ENCODE measurements at regions of chr2 and their contacts with region 1.

Region 1: GRCh38 chr2:203928849-203929248 is 7.7 kb upstream of the ICOS start:
- DNase-seq: peak in 3 of 14 experiments; percentile 52 to 62 (median 59)
- ATAC-seq: peak; percentile 41
- H3K4me3 ChIP-seq: no peak overlapping the region
- H3K4me3 Mint-ChIP-seq: no peak overlapping the region
- H3K27ac ChIP-seq: no peak overlapping the region
- H3K27ac Mint-ChIP-seq: no peak overlapping the region
- H3K4me1 ChIP-seq: peaks cover 19% of the 10 kb centered on the region
- H3K4me1 Mint-ChIP-seq: peaks cover 39% of the 10 kb centered on the region
- H3K27me3 ChIP-seq: no peaks in the 10 kb centered on the region
- H3K27me3 Mint-ChIP-seq: no peaks in the 10 kb centered on the region
- CTCF ChIP-seq: peak; percentile 80

Region 2: DNA sequence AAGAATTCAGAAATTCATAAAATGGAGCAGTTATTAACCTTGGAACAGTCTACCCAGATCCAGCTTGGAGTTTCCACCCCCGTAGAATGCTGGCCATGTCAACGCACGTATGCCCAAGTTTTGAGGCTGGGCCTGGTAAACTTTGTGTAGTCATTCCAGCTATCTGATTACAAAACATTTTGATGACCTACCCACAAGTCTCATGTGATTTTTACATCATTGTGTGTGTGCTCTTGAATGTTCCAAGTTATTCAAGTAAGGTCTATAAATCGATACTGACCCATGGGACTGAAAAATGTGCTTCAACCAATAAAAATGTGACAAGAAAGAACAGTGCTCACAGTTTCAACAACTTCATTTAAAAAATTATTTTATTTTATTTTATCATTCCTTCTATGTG is 24.8 kb before region 1 on chr2:
- CTCF ChIA-PET with region 1: no interaction called
- POLR2A ChIA-PET with region 1: no interaction called
- intact Hi-C with region 1: no loop called
- DNase-seq: no peak
- ATAC-seq: no peak
- H3K4me3 ChIP-seq: no peak overlapping the region
- H3K4me3 Mint-ChIP-seq: no peak overlapping the region
- H3K27ac ChIP-seq: no peak overlapping the region
- H3K27ac Mint-ChIP-seq: no peak overlapping the region
- H3K4me1 ChIP-seq: peaks cover 7% of the 10 kb centered on the region
- H3K4me1 Mint-ChIP-seq: peaks cover 2% of the 10 kb centered on the region
- H3K27me3 ChIP-seq: no peaks in the 10 kb centered on the region
- H3K27me3 Mint-ChIP-seq: no peaks in the 10 kb centered on the region
- CTCF ChIP-seq: no peak

Region 3: DNA sequence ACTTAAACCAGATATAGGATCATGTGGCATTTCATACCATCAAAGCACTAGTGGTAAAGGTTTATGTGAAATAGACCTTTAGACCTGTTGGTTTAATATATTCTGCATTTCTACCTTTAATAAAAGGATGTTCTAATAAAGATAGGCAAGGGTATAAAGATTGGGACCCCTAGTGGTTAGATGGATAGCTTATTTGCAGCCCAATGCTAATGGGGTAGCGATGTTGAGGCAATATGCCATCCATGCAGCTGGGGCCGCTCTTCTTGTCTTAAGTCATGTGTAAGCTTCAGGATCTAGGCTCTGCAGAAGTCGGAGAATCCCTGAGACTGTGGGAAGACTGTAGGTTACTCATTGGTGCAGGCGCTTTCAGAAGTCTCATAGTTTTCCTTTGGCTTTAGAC is 122.6 kb after region 1 on chr2:
- CTCF ChIA-PET with region 1: interaction called, 9 read pairs
- POLR2A ChIA-PET with region 1: interaction called, 7 read pairs
- intact Hi-C with region 1: loop called (anchors 1 to 2 kb)
- DNase-seq: peak in 4 of 14 experiments; percentile 5 to 55 (median 47)
- ATAC-seq: peak; percentile 52
- H3K4me3 ChIP-seq: no peak overlapping the region
- H3K4me3 Mint-ChIP-seq: no peak overlapping the region
- H3K27ac ChIP-seq: no peak overlapping the region
- H3K27ac Mint-ChIP-seq: no peak overlapping the region
- H3K4me1 ChIP-seq: no peaks in the 10 kb centered on the region
- H3K4me1 Mint-ChIP-seq: peaks cover 7% of the 10 kb centered on the region
- H3K27me3 ChIP-seq: no peaks in the 10 kb centered on the region
- H3K27me3 Mint-ChIP-seq: no peaks in the 10 kb centered on the region
- CTCF ChIP-seq: peak; percentile 69

Region 4: GRCh38 chr2:204170411-204170810 is 241.6 kb after region 1 on chr2:
- CTCF ChIA-PET with region 1: no interaction called
- POLR2A ChIA-PET with region 1: no interaction called
- intact Hi-C with region 1: no loop called
- DNase-seq: no peak
- ATAC-seq: no peak
- H3K4me3 ChIP-seq: no peak overlapping the region
- H3K4me3 Mint-ChIP-seq: no peak overlapping the region
- H3K27ac ChIP-seq: no peak overlapping the region
- H3K27ac Mint-ChIP-seq: no peak overlapping the region
- H3K4me1 ChIP-seq: no peaks in the 10 kb centered on the region
- H3K4me1 Mint-ChIP-seq: no peaks in the 10 kb centered on the region
- H3K27me3 ChIP-seq: peaks cover 0 to 4% of the 10 kb centered on the region in 2 experiments
- H3K27me3 Mint-ChIP-seq: no peaks in the 10 kb centered on the region
- CTCF ChIP-seq: no peak